Activated CD8-positive, alpha-beta memory T cell treated with anti-CD3 and anti-CD28 coated beads, Interleukin-2, amount 10 ng/mL, durations not matched to agents 7 days and 5 days (primary cell): ENCODE measurements at regions of chr4 and their contacts with region 1.

Region 1: DNA sequence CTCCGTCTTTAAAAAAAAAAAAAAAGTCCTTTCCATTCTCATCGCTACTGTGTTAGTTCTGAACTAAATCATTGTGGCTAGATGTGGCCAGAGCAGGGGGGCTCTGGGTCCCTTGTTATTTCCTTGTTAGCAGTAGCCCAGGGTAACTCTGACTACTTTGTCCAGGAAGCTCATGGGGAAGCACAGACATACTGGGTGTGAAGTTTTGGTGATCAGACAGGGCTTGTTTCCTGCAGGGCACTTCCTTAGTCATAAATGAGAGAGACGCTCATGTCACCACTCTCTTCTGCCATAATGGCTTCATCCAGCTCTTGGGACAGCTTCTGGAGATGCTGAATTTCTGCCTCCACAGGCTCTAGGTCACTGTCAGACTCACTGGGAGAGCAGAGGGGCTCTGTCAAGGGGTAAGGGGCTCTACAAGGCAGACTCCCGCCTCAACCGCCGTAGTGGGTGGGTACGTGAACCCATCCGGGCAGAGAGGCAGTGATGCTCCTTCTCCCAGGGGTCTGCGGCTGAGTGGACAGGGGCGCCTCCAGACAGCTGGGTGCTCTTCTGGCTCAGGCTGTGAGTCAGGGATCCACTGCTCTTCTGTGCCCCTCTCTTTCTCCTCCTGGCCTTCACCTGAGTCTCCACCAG is 12.9 kb downstream of the STIM2 start:
- DNase-seq: peak; percentile 93
- ATAC-seq: peak; percentile 93
- H3K4me3 Mint-ChIP-seq: peak overlapping the region; percentile 48
- H3K27ac Mint-ChIP-seq: peak overlapping the region; percentile 89
- H3K4me1 Mint-ChIP-seq: peaks cover 75% of the 10 kb centered on the region
- H3K27me3 Mint-ChIP-seq: no peaks in the 10 kb centered on the region

Region 2: GRCh38 chr4:26860157-26860921 is 13.2 kb before region 1 on chr4 and contains the start of gene STIM2:
- CTCF ChIA-PET with region 1: interaction called, 31 read pairs
- DNase-seq: peak; percentile 98
- ATAC-seq: peak; percentile 74
- H3K4me3 Mint-ChIP-seq: peak within 1 kb of the TSS; percentile 87
- H3K27ac Mint-ChIP-seq: peak within 1 kb of the TSS; percentile 99
- H3K4me1 Mint-ChIP-seq: peaks cover 50% of the 10 kb centered on the region
- H3K27me3 Mint-ChIP-seq: no peaks in the 10 kb centered on the region
- total RNA-seq, gene STIM2: 54.6 to 66.3 TPM

Region 3: DNA sequence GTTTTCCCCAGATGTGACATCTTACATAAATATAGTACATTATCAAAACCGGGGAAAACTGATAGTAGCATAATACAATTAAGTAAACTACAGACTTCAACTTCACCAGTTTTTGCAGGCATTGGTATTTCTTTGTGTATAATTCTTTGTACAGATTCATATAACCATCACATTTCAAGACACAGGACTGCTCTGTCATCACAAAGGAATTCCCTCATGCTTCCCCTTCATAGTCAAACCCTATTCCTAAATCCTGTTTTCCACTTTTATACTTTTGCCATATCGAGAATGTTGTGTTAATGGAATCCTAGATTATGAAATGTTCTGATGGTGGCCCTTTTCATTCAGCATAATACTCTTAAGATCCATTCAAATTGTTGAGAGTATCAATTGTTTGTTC is 23.1 kb after region 1 on chr4:
- CTCF ChIA-PET with region 1: no interaction called
- DNase-seq: no peak
- ATAC-seq: no peak
- H3K4me3 Mint-ChIP-seq: no peak overlapping the region
- H3K27ac Mint-ChIP-seq: no peak overlapping the region
- H3K4me1 Mint-ChIP-seq: peaks cover 49% of the 10 kb centered on the region
- H3K27me3 Mint-ChIP-seq: no peaks in the 10 kb centered on the region